H1 (cell line): ENCODE measurements at regions of chr13 and their contacts with region 1.

Region 1: GRCh38 chr13:39273953-39274738 is 235.9 kb downstream of the NHLRC3 start:
- DNase-seq: no peak
- H3K4me3 ChIP-seq: no peak overlapping the region
- H3K27ac ChIP-seq: no peak overlapping the region
- H3K4me1 ChIP-seq: no peaks in the 10 kb centered on the region
- H3K27me3 ChIP-seq: no peaks in the 10 kb centered on the region
- CTCF ChIP-seq: peak; percentile 20 to 66 (median 48)
- EP300 ChIP-seq: no peak
- POLR2A ChIP-seq: no peak
- RAD21 ChIP-seq: peak; percentile 80 to 83

Region 2: DNA sequence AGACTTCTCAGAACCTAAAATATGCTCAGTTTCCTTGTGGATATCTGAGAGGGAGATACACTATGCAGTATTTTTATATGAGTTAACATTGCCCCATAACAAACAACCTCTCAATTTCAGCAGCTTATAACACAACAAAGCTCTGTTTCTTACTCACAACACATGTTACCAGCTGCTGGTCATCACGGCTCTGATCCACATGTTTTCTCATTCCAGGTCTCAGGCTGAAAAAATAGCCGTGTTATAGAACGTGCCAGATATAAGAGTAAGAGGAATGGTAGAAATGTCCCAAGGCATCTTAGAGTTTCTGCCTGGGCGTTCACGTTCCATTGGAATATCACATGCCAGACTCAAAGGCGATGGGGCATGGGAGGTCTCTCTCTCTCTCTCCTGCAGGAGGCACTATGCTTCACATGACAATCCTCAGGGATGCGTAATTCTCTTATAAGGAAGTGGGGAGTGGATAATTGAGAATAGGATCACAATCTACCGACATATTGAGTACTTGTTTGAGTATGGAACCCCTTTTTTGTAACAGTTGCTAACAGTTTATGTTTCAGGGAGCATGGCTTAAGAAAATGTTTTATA is 10.7 kb after region 1 on chr13:
- CTCF ChIA-PET with region 1: interaction called, 13 read pairs
- POLR2A ChIA-PET with region 1: no interaction called
- DNase-seq: no peak
- H3K4me3 ChIP-seq: no peak overlapping the region
- H3K27ac ChIP-seq: no peak overlapping the region
- H3K4me1 ChIP-seq: no peaks in the 10 kb centered on the region
- H3K27me3 ChIP-seq: no peaks in the 10 kb centered on the region
- CTCF ChIP-seq: peak; percentile 54 to 75 (median 60)
- EP300 ChIP-seq: no peak
- POLR2A ChIP-seq: no peak
- RAD21 ChIP-seq: peak; percentile 68 to 78

Region 3: DNA sequence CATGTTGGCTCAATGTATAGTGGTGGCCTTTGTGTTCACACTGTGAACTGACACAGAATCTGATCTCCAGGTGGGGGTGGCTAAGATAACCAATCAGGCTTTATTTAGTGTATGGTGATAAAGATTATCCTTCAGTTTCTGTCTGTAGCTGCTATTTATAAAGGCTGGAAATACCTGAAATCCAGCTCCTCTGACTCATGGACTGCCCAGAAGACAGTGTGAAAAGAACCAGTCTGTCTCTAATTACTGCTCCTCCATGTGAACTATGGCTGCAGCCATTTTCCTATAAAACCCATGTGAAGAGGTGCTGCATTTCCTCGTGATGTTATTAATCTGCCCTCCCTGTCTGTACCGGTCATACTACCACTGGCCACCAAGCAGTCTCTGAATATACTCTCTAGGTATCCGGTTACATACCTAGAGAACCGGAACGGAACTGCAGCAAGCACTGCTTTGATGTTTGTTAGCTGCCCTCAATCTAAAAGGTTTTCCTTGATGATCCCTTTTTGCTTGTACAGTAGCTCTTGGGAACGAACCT is 90.9 kb after region 1 on chr13:
- CTCF ChIA-PET with region 1: no interaction called
- POLR2A ChIA-PET with region 1: no interaction called
- DNase-seq: no peak
- H3K4me3 ChIP-seq: no peak overlapping the region
- H3K27ac ChIP-seq: no peak overlapping the region
- H3K4me1 ChIP-seq: peaks cover 0 to 8% (median 0%) of the 10 kb centered on the region in 4 experiments; a peak in 3 of 7 replicates
- H3K27me3 ChIP-seq: no peaks in the 10 kb centered on the region
- CTCF ChIP-seq: peak in 2 of 3 experiments; percentile 9 to 29; a peak in 2 of 4 replicates
- EP300 ChIP-seq: no peak
- POLR2A ChIP-seq: no peak
- RAD21 ChIP-seq: no peak